IMR-90 (cell line): ENCODE measurements at regions of chr10 and their contacts with region 1.

Region 1: GRCh38 chr10:113385021-113385999 is 167.5 kb upstream of the HABP2 start:
- DNase-seq: peak; percentile 85
- ATAC-seq: peak; percentile 98
- H3K4me3 ChIP-seq: no peak overlapping the region
- H3K27ac ChIP-seq: no peak overlapping the region
- H3K4me1 ChIP-seq: peaks cover 3% of the 10 kb centered on the region; the same call in 1 of the 2 replicates
- H3K27me3 ChIP-seq: peaks cover 12% of the 10 kb centered on the region
- CTCF ChIP-seq: peak; percentile 96
- POLR2A ChIP-seq: peak; percentile 60; the same call in 1 of the 2 replicates
- RAD21 ChIP-seq: peak; percentile 99

Region 2: DNA sequence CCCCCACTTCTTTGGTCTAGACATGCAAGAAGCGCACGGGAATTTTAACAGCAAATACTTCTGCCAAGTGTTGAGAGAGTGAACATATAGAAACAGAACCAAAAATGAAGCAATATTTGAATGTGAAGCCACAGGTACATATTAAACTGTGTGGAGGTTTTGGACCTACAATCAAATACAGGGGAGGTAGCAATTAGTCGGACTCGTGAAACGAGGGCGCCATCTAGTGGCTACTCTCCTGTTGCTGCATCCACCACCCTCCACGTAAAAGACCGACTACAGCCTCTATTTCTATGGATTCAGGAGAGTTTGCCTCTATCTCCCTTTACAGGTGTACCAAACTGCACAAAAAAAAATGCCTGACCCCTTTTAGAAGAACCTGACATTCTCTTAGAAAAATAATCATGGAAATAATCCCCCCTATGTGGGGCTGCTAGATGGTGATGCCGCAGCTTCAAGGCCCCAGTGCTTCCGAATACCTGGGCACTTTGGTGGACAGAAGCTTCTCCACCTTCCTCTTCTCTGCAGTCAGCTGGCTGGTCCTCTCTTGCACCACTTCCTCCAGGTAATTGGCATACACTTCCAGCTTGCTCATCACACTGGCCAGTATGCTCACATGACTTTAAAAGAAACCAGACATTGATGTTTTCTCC is 1070.4 kb before region 1 on chr10:
- CTCF ChIA-PET with region 1: no interaction called
- POLR2A ChIA-PET with region 1: no interaction called
- dilution Hi-C with region 1: no loop called
- in situ Hi-C with region 1: no loop called
- intact Hi-C with region 1: loop called (anchors 10 kb)
- DNase-seq: peak; percentile 70
- ATAC-seq: peak; percentile 94
- H3K4me3 ChIP-seq: no peak overlapping the region
- H3K27ac ChIP-seq: no peak overlapping the region
- H3K4me1 ChIP-seq: no peaks in the 10 kb centered on the region
- H3K27me3 ChIP-seq: peaks cover 2% of the 10 kb centered on the region
- CTCF ChIP-seq: peak; percentile 90
- POLR2A ChIP-seq: no peak
- RAD21 ChIP-seq: peak; percentile 94

Region 3: GRCh38 chr10:112565434-112566053 is 819.8 kb before region 1 on chr10:
- CTCF ChIA-PET with region 1: interaction called, 3 read pairs
- POLR2A ChIA-PET with region 1: no interaction called
- dilution Hi-C with region 1: no loop called
- in situ Hi-C with region 1: loop called (anchors 10 kb)
- intact Hi-C with region 1: loop called (anchors 1 kb)
- DNase-seq: peak; percentile 72
- ATAC-seq: peak; percentile 82
- H3K4me3 ChIP-seq: no peak overlapping the region
- H3K27ac ChIP-seq: no peak overlapping the region
- H3K4me1 ChIP-seq: peaks cover 1% of the 10 kb centered on the region; the same call in 1 of the 2 replicates
- H3K27me3 ChIP-seq: no peaks in the 10 kb centered on the region
- CTCF ChIP-seq: peak; percentile 80
- POLR2A ChIP-seq: no peak
- RAD21 ChIP-seq: peak; percentile 85

Region 4: GRCh38 chr10:112949875-112950507 is 435.3 kb before region 1 on chr10 and contains the start of gene TCF7L2:
- CTCF ChIA-PET with region 1: no interaction called
- POLR2A ChIA-PET with region 1: no interaction called
- dilution Hi-C with region 1: no loop called
- in situ Hi-C with region 1: no loop called
- intact Hi-C with region 1: loop called (anchors 1 kb)
- DNase-seq: peak; percentile 95
- ATAC-seq: peak; percentile 87
- H3K4me3 ChIP-seq: peak within 1 kb of the TSS; percentile 90
- H3K27ac ChIP-seq: peak within 1 kb of the TSS; percentile 99
- H3K4me1 ChIP-seq: peaks cover 2% of the 10 kb centered on the region; the same call in 1 of the 2 replicates
- H3K27me3 ChIP-seq: no peaks in the 10 kb centered on the region
- CTCF ChIP-seq: 0 out of 2 replicates have a peak, but pooled peaks have one; percentile 2
- POLR2A ChIP-seq: peak; percentile 80
- RAD21 ChIP-seq: peak; percentile 13; the same call in 1 of the 2 replicates
- total RNA-seq, gene TCF7L2: 1.3 and 1.7 TPM in 2 replicates

Region 5: DNA sequence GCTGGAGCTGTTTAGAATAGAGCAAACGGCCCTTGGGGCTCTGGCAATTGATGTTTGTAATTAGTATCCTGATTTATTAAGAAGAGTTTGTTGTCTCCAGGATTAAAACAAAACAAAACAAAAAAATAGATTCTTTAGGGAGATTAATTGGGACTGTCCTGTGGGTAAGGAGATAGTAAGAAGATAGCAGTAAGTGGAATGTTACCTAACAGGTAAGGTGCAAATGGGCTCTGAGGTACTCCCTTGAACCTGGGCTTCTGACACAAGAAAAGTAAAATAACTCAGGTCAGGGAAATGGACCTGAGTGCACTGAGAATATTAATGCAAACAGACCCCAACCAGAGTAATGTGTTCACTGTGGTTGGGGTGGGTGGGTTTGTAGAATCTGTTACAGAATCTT is 279.5 kb before region 1 on chr10:
- CTCF ChIA-PET with region 1: interaction called, 10 read pairs
- POLR2A ChIA-PET with region 1: no interaction called
- dilution Hi-C with region 1: no loop called
- in situ Hi-C with region 1: no loop called
- intact Hi-C with region 1: no loop called
- DNase-seq: no peak
- ATAC-seq: no peak
- H3K4me3 ChIP-seq: no peak overlapping the region
- H3K27ac ChIP-seq: no peak overlapping the region
- H3K4me1 ChIP-seq: peaks cover 11% of the 10 kb centered on the region
- H3K27me3 ChIP-seq: no peaks in the 10 kb centered on the region
- CTCF ChIP-seq: no peak
- POLR2A ChIP-seq: no peak
- RAD21 ChIP-seq: no peak

Region 6: DNA sequence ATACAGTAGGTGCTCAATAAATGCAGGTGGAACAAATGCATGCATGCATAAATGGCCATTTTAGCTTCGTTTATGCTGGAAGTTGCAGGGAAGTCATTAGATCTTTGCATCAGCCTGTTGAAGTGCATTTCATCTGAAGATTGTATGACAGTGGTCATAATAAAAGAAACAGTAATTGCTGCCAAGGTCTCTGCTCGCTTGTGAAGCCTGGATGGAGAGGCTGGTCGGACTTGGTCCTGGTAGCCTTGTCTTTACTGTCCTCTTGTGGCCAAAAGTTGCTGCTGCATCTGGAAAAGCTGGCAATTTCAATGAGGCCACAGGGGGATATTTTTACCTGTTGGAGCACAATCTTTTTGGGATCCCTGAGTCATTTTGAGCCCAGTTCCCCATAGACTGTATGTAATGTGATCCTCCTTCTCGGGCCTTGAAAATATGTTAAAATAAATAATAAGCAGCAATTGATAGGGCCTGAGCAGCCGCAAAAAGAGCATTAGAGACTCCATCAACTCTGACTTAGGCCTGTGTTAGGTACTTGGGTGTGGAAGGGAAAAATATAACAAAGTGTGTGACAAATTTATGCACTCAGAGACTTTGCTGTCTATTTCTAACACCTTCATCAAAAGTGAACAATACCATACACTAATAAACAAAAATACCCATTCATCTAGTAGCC is 135.9 kb after region 1 on chr10:
- CTCF ChIA-PET with region 1: no interaction called
- POLR2A ChIA-PET with region 1: no interaction called
- dilution Hi-C with region 1: no loop called
- in situ Hi-C with region 1: no loop called
- intact Hi-C with region 1: loop called (anchors 1 kb)
- DNase-seq: peak; percentile 70
- ATAC-seq: peak; percentile 96
- H3K4me3 ChIP-seq: no peak overlapping the region
- H3K27ac ChIP-seq: no peak overlapping the region
- H3K4me1 ChIP-seq: no peaks in the 10 kb centered on the region
- H3K27me3 ChIP-seq: 0 out of 2 replicates have a peak, but pooled peaks cover 2% of the 10 kb centered on the region
- CTCF ChIP-seq: peak; percentile 95
- POLR2A ChIP-seq: no peak
- RAD21 ChIP-seq: peak; percentile 89